ENCODE measurements at regions of chr5 and their contacts with region 1.

Region 1: GRCh38 chr5:119267958-119268386 is 87.8 kb upstream of the TNFAIP8 start:
- DNase-seq: peak; percentile 46 to 84
- ATAC-seq: peak; percentile 77 to 79
- H3K4me3 ChIP-seq: peak overlapping the region; percentile 69
- H3K27ac ChIP-seq: peak overlapping the region; percentile 86 to 93
- H3K4me1 ChIP-seq: peaks cover 34% of the 10 kb centered on the region
- CTCF ChIP-seq: no peak
- EP300 ChIP-seq: no peak
- POLR2A ChIP-seq: no peak
- RAD21 ChIP-seq: no peak

Region 2: DNA sequence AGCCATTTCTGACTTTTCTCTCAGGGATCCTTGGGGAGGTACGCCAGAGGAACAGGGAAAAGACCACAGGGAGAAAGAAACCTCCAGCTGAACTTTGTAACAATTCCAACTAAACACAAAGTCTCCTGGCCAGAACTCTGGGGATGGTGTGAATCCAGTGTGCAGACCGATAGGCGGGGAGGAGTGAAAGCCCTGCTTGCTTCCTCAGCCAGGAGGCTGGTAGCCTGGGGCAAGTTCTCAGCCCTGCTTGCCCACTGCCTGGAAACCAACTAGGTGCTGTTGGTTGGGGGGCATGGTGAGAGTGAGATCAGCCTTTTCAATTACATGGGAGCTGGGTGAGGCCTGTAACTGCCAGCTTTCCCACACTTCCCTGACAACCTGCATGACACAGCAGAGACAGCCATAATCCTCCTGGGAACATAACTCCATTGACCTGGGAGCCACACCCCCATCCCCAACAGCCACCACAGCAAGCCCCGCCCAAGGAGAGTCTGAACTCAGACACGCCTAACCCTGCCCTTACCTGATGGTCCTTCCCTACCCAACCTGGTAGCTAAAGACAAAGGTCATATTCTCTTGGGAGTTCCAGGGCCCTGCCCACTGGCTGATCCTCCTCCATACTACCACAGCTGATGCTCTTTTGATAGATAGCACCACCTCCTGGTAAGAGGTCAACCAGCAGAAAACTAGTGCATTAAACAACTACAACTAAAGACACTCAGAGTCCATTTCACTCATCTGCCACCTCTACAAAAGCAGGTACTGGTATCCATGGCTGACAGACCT is 12.2 kb before region 1 on chr5:
- CTCF ChIA-PET with region 1: no interaction called
- POLR2A ChIA-PET with region 1: no interaction called
- DNase-seq: peak in 1 of 2 experiments; percentile 32
- ATAC-seq: peak in 1 of 2 experiments; percentile 67; a peak in 3 of 6 replicates
- H3K4me3 ChIP-seq: no peak overlapping the region
- H3K27ac ChIP-seq: no peak overlapping the region
- H3K4me1 ChIP-seq: no peaks in the 10 kb centered on the region
- CTCF ChIP-seq: no peak
- EP300 ChIP-seq: no peak
- POLR2A ChIP-seq: no peak
- RAD21 ChIP-seq: peak in 1 of 2 experiments; percentile 5; a peak in 1 of 5 replicates

Region 3: GRCh38 chr5:119287547-119288073 is 19.6 kb after region 1 on chr5:
- CTCF ChIA-PET with region 1: interaction called, 3 read pairs
- POLR2A ChIA-PET with region 1: interaction called, 12 read pairs
- DNase-seq: peak in 1 of 2 experiments; percentile 73
- ATAC-seq: peak; percentile 44 to 82; a peak in 3 of 6 replicates
- H3K4me3 ChIP-seq: peak overlapping the region; percentile 23
- H3K27ac ChIP-seq: peak overlapping the region; percentile 73 to 83
- H3K4me1 ChIP-seq: peaks cover 78% of the 10 kb centered on the region
- CTCF ChIP-seq: no peak
- EP300 ChIP-seq: peak; percentile 31 to 69; a peak in 2 of 5 replicates
- POLR2A ChIP-seq: no peak
- RAD21 ChIP-seq: no peak

Region 4: GRCh38 chr5:119360905-119361593 is 93.1 kb after region 1 on chr5:
- CTCF ChIA-PET with region 1: no interaction called
- POLR2A ChIA-PET with region 1: no interaction called
- DNase-seq: no peak
- ATAC-seq: no peak; a peak in 1 of 6 replicates
- H3K4me3 ChIP-seq: no peak overlapping the region
- H3K27ac ChIP-seq: no peak overlapping the region
- H3K4me1 ChIP-seq: peaks cover 22% of the 10 kb centered on the region
- CTCF ChIP-seq: no peak
- EP300 ChIP-seq: no peak
- POLR2A ChIP-seq: no peak
- RAD21 ChIP-seq: no peak

Region 5: GRCh38 chr5:119389288-119390030 is 121.5 kb after region 1 on chr5:
- CTCF ChIA-PET with region 1: no interaction called
- POLR2A ChIA-PET with region 1: no interaction called
- DNase-seq: no peak
- ATAC-seq: no peak
- H3K4me3 ChIP-seq: no peak overlapping the region
- H3K27ac ChIP-seq: no peak overlapping the region
- H3K4me1 ChIP-seq: peaks cover 13% of the 10 kb centered on the region; the same call in 2 of the 3 replicates
- CTCF ChIP-seq: no peak
- EP300 ChIP-seq: no peak
- POLR2A ChIP-seq: no peak
- RAD21 ChIP-seq: no peak

Region 6: GRCh38 chr5:119527351-119527750 is 259.4 kb after region 1 on chr5:
- CTCF ChIA-PET with region 1: no interaction called
- POLR2A ChIA-PET with region 1: no interaction called
- DNase-seq: no peak
- ATAC-seq: no peak
- H3K4me3 ChIP-seq: no peak overlapping the region
- H3K27ac ChIP-seq: no peak overlapping the region
- H3K4me1 ChIP-seq: 0 out of 3 replicates have a peak, but pooled peaks cover 4% of the 10 kb centered on the region
- CTCF ChIP-seq: no peak
- EP300 ChIP-seq: no peak
- POLR2A ChIP-seq: no peak
- RAD21 ChIP-seq: no peak